ENCODE measurements at regions of chr5 and their contacts with region 1.

Region 1: DNA sequence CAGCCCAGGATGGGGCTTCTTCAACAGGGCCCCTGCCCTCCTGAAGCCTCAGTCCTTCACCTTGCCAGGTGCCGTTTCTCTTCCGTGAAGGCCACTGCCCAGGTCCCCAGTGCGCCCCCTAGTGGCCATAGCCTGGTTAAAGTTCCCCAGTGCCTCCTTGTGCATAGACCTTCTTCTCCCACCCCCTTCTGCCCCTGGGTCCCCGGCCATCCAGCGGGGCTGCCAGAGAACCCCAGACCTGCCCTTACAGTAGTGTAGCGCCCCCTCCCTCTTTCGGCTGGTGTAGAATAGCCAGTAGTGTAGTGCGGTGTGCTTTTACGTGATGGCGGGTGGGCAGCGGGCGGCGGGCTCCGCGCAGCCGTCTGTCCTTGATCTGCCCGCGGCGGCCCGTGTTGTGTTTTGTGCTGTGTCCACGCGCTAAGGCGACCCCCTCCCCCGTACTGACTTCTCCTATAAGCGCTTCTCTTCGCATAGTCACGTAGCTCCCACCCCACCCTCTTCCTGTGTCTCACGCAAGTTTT is 23.6 kb downstream of the PCDHGC5 start:
- DNase-seq: peak; percentile 85
- CTCF ChIP-seq: peak; percentile 79

Region 2: DNA sequence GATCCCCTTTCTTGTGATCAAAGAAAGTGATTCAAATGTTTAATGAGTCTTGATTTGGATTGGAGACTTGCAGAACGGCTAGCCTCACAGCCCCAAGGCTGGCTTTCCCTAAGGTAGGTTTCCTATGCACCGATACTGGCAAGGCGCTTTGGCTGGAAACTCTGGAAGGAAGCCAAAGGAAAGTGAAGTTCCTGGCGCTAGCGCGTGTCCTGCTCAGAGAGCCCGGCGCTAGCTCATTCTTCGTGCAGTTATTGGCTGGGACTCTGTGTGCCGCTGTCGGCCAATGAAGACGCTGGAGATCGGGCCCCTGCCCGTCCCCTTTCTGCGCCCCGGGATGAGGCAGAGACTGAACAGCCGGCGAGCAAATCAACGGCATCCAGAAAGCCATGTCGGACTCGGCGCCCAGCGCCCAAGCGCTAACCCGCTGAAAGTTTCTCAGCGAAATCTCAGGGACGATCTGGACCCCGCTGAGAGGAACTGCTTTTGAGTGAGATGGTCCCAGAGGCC is 36.8 kb before region 1 on chr5 and contains the start of gene PCDHGC3:
- CTCF ChIA-PET with region 1: interaction called, 130 read pairs
- POLR2A ChIA-PET with region 1: no interaction called
- DNase-seq: peak; percentile 89
- CTCF ChIP-seq: peak; percentile 75

Region 3: GRCh38 chr5:141484641-141485311 is 27.7 kb before region 1 on chr5 and contains the start of gene PCDHGC4:
- CTCF ChIA-PET with region 1: interaction called, 28 read pairs
- POLR2A ChIA-PET with region 1: no interaction called
- DNase-seq: peak; percentile 35
- CTCF ChIP-seq: no peak

Region 4: DNA sequence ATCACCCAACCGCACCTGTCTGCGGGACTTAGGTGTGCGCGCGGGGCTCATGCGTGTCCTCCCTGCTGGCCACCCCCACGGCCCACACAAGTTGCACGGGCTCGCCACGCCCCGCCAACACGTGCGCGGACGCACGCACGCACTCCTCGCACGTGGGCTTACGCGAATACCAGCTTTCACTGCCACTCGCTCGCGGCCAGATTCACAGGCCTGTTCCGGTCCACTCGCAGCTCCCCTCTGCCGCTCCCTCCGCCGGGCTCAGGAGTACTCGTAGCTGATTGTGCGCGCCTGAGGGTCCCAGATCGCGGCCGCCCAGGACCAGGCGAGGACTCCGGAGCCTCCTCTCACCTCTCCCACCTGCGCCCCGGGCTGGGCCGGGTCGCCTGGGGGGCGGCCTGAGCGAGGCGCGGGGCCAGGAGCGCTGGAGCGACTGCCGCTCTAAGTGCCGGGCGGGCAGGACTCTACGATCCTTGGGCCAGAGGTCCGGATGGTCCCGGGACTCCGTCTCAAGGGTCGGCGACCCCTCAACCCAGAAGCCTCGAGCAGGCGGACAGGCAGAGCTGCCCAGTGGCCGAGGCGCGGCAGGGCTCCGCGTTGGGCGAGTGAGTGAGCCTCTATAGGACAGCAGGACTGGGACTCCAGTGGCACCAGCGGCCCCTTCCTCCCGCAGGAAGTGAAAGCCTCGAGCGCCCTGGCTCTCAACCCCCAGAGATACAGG is 20.1 kb before region 1 on chr5:
- CTCF ChIA-PET with region 1: interaction called, 31 read pairs
- POLR2A ChIA-PET with region 1: no interaction called
- DNase-seq: peak; percentile 63
- CTCF ChIP-seq: no peak